ENCODE measurements at regions of chr17 and their contacts with region 1.

Region 1: DNA sequence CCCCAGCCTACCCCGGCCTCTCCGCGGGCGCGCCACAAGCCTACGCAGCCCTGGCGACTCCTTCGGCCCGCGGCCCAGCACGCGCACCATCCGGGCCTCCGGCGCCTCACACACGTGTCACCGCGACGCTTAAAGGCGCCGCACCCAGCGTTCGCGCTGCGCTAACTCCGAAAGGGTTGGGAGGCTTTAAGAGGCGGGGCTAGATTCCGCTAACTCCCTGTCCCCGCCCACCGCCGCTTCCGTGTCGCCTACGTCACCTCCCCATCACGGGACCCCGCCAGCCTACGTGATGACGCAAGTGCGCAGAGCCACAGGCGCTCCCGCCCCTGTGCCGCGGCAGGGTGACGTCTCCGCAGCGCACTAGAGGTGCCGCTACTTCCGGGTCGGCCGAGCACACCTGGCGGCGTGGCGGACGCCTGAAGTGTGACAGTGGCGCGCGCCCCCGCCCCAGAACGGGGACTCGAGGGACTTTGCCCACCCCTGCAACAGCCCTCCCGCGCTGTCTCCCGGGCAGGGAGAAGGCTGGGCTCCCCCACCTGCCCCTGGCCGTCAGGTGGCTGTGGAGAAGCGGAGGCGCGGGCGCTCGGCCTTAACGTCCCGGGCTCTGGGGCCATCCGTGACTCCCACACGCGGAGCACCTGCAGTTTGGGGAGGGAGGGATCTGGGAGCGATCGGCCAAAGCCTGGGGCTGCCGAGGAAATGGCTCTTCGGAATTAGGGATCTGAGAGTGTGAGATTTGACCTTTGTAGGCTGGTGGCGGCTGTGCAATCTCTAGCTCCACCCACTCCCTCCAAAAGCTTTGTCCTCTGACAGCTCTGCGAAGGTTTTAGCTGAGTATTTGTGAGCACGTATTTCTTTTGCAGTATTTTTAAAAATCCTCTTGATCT is at the start of gene USP36:
- DNase-seq: peak; percentile 100
- ATAC-seq: peak; percentile 89
- H3K4me3 Mint-ChIP-seq: peak within 1 kb of the TSS; percentile 82
- H3K27ac Mint-ChIP-seq: peak within 1 kb of the TSS; percentile 96
- H3K4me1 Mint-ChIP-seq: peaks cover 43% of the 10 kb centered on the region
- H3K27me3 Mint-ChIP-seq: no peaks in the 10 kb centered on the region
- total RNA-seq, gene USP36: 67.5 TPM

Region 2: DNA sequence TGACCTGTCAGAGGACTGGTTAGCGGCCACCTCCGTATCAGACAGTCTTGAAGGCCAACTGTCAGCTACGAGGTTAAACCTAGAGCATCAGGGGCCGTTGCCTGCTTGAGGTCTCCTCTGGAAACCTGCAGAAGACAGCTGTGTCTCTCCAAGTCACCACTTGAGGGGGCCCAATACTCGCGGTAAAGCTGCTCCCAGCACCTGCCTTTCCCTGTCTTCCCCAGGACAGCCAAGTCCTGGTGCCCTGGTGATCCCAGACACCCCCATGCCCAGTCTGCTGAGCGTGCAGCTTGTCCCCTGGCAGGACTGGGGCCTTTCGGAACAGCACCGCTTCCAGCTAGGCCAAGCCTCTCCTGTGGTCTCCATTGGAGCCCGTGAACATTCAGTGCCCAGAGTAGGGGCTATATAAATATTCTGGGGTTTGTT is 343.8 kb before region 1 on chr17:
- CTCF ChIA-PET with region 1: interaction called, 15 read pairs
- POLR2A ChIA-PET with region 1: no interaction called
- DNase-seq: peak; percentile 67
- ATAC-seq: peak; percentile 73
- H3K4me3 Mint-ChIP-seq: no peak overlapping the region
- H3K27ac Mint-ChIP-seq: no peak overlapping the region
- H3K4me1 Mint-ChIP-seq: no peaks in the 10 kb centered on the region
- H3K27me3 Mint-ChIP-seq: no peaks in the 10 kb centered on the region

Region 3: DNA sequence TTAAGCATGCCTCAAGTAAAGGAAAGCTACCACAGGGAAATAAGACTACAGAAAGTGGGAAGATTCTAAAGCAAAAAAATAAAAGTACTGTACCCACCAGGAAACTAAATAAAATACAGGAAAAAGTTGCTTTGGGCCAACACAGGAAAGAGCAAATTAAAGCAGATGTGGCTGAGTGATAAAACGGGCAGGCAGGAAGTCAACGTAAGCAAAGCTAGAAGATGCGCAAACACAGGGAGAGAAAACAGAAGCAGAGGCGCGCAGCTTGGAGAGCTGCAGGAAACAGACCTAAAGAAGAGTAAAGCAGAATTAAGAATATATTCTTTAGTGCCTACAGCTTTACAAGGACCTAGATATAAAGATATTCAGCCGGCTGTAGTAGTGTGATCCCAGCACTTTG is 22.0 kb before region 1 on chr17:
- CTCF ChIA-PET with region 1: interaction called, 19 read pairs
- POLR2A ChIA-PET with region 1: interaction called, 10 read pairs
- DNase-seq: peak; percentile 78
- ATAC-seq: peak; percentile 58
- H3K4me3 Mint-ChIP-seq: peak overlapping the region; percentile 58
- H3K27ac Mint-ChIP-seq: peak overlapping the region; percentile 90
- H3K4me1 Mint-ChIP-seq: peaks cover 65% of the 10 kb centered on the region
- H3K27me3 Mint-ChIP-seq: no peaks in the 10 kb centered on the region

Region 4: DNA sequence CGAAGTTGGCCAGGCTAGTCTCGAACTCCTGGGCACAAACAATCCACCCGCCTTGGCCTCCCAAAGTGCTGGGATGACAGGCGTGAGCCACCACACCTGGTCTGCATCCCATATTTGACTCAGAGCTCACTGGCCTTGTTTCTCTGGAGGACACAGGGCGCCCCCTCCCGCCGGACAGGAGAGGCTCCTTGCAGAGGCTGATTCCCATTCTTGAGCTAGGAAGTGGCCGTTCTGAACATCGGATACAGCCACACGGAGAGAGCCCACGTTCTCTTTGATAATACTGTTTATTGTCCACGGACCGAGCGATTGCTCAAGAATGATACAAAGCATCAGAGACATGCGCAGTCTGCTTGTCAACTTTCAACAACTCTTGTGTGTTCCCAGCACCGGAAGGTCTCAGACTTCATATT is 11.7 kb after region 1 on chr17:
- CTCF ChIA-PET with region 1: interaction called, 12 read pairs
- POLR2A ChIA-PET with region 1: no interaction called
- DNase-seq: no peak
- ATAC-seq: no peak
- H3K4me3 Mint-ChIP-seq: no peak overlapping the region
- H3K27ac Mint-ChIP-seq: no peak overlapping the region
- H3K4me1 Mint-ChIP-seq: no peaks in the 10 kb centered on the region
- H3K27me3 Mint-ChIP-seq: no peaks in the 10 kb centered on the region

Region 5: DNA sequence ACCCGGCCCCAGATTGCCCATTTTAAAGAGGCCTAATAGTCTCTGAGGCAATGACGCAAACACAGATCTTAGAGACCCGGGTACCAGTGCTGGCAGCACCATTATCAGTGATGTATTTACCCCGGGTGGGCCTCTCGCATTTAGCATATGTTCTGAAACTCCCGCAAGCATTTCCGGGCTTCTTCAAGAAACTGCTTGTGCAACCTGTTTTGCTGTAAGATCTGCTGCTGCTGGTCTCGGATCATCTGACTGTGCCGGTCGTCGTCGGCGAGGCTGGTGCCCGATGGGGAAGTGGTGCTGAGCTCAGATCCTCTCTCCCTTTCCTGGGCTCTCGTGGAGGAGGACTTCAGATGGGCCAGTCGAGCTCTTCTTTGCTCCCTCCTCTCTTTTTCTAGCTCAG is 49.5 kb after region 1 on chr17:
- CTCF ChIA-PET with region 1: no interaction called
- POLR2A ChIA-PET with region 1: no interaction called
- DNase-seq: peak; percentile 73
- ATAC-seq: peak; percentile 75
- H3K4me3 Mint-ChIP-seq: no peak overlapping the region
- H3K27ac Mint-ChIP-seq: peak overlapping the region; percentile 89
- H3K4me1 Mint-ChIP-seq: peaks cover 37% of the 10 kb centered on the region
- H3K27me3 Mint-ChIP-seq: no peaks in the 10 kb centered on the region